ENCODE measurements at regions of chr5 and their contacts with region 1.

Region 1: GRCh38 chr5:31854181-31855133 is 215.5 kb downstream of the PDZD2 start:
- DNase-seq: peak; percentile 38 to 82
- H3K4me3 ChIP-seq: peak overlapping the region; percentile 54 to 79 (median 70)
- H3K27ac ChIP-seq: 0 out of 2 replicates have a peak overlapping the region, but pooled peaks have one; percentile 31
- H3K4me1 ChIP-seq: peaks cover 2 to 15% (median 10%) of the 10 kb centered on the region in 4 experiments; a peak in 5 of 7 replicates
- H3K27me3 ChIP-seq: no peaks in the 10 kb centered on the region
- CTCF ChIP-seq: no peak
- EP300 ChIP-seq: no peak
- POLR2A ChIP-seq: peak in 1 of 2 experiments; percentile 50; a peak in 2 of 3 replicates
- RAD21 ChIP-seq: no peak

Region 2: DNA sequence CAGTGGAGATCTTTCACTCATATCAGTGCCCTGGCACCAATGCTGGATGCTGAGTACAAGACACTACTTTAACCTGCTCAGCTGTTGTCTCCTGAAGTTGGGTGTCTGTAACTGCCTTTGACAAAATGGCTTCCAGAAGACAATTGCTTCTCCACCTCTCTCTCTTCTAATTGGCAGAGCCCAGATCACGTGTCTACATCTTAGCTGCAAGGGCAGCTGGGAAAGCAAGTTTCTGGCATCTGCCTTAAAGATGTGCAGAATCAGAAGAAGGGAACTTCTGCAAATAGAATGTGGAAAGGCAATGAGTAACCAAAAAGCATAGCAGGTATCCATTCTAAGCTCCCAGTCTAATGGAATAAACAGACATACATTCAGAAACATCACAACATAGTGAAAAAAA is 134.4 kb before region 1 on chr5:
- CTCF ChIA-PET with region 1: no interaction called
- POLR2A ChIA-PET with region 1: no interaction called
- DNase-seq: no peak
- H3K4me3 ChIP-seq: no peak overlapping the region
- H3K27ac ChIP-seq: no peak overlapping the region
- H3K4me1 ChIP-seq: no peaks in the 10 kb centered on the region; a peak in 2 of 7 replicates
- H3K27me3 ChIP-seq: no peaks in the 10 kb centered on the region
- CTCF ChIP-seq: no peak
- EP300 ChIP-seq: no peak
- POLR2A ChIP-seq: no peak
- RAD21 ChIP-seq: no peak

Region 3: GRCh38 chr5:31889001-31889561 is 34.6 kb after region 1 on chr5:
- CTCF ChIA-PET with region 1: interaction called, 11 read pairs
- POLR2A ChIA-PET with region 1: interaction called, 3 read pairs
- DNase-seq: peak in 1 of 2 experiments; percentile 13
- H3K4me3 ChIP-seq: no peak overlapping the region
- H3K27ac ChIP-seq: no peak overlapping the region
- H3K4me1 ChIP-seq: peaks cover 4 to 14% (median 12%) of the 10 kb centered on the region in 4 experiments; a peak in 6 of 7 replicates
- H3K27me3 ChIP-seq: no peaks in the 10 kb centered on the region
- CTCF ChIP-seq: no peak
- EP300 ChIP-seq: no peak
- POLR2A ChIP-seq: no peak
- RAD21 ChIP-seq: no peak